Sigmoid colon (tissue), 7 donors: ENCODE measurements at regions of chr16 and their contacts with region 1.

Region 1: DNA sequence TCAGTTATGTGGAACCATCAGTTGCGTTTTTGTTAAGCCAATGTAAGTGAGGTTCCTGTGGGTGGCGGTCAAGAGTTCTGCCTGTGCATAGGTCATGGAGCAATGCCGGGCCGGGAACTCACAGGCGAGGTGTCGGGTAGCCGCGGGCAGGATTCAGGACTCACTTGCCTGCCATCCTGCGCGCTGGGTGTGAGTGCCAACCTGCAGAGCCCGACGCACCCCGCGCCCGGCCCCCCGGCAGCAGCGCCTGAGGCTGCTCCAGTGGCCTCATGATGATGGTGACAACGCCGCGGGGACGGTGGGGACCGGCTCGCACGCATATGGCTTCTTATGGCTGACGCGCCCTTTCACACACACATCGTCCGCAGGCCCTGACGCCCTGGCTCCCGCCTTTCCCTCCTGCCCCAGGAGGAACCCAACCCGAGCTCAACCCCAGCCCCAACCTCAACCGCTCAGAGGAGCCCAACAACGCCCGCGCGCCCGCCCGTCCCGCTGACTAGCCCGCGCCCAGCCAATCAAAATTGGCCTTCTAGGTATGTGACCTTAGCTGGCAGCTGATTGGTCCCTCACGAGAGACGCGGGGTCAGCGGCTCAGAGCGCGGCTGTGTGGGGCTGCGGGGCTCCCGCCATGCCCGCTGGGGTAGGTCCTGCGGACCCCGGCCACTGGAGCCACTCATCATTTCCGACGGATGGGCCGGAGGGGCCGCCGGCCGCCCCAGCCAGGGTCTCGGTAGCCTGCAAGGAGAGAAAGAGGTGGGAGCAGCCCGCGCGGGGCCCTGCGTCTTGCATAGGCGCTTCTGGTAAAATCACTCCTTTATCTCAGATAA is at the start of gene C16orf95:
- DNase-seq: peak; percentile 98
- H3K4me3 ChIP-seq: peak within 1 kb of the TSS; percentile 64 to 99 (median 90)
- H3K27ac ChIP-seq: peak within 1 kb of the TSS; percentile 92 to 98 (median 96)
- H3K4me1 ChIP-seq: peaks cover 0 to 12% (median 9%) of the 10 kb centered on the region in 4 donors
- H3K27me3 ChIP-seq: no peaks in the 10 kb centered on the region
- CTCF ChIP-seq: peak; percentile 56 to 70 (median 61)
- EP300 ChIP-seq: no peak
- POLR2A ChIP-seq: peak; percentile 96 to 97
- total RNA-seq, gene C16orf95: 0.36 to 1.9 (median 1.2) TPM in 3 of 4 donors, not detected in the other

Region 2: DNA sequence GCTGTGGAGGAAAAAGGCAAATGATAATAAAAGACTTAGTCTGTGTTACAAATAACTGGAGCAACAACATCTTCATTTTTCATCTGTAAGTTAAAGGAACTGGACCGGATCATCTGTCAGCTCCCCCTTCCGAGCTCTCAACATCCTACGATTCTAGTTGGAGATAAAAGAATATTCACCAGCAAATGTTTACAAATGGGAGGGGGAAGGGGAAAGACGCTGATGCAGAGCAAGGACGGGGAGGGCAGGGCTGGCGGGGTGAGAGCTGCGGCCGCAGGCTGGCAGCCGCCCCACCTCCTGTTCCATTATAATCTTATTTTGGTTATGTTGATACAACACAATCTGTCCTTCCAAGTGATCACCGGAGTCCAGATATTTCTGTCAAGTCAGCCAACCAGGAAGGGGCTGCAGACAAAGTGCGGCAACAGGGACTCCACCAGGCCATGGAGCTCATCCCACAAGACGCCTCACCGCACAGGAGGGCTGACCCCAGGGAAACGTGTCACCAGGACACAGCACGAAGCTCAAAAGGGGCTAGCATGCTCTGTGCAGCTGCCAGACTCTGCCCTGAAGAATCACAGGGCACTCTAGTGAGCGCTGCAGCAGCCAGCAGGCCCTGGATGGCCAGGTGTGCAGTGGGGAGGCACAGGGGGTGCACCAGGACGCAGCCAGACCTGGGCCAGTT is 46.8 kb after region 1 on chr16:
- intact Hi-C with region 1: loop called (anchors 5 kb)
- DNase-seq: peak; percentile 91
- H3K4me3 ChIP-seq: peak overlapping the region in 3 of 4 donors; percentile 11 to 26 (median 12)
- H3K27ac ChIP-seq: peak overlapping the region; percentile 76 to 89 (median 86)
- H3K4me1 ChIP-seq: peaks cover 0 to 48% (median 45%) of the 10 kb centered on the region in 4 donors
- H3K27me3 ChIP-seq: no peaks in the 10 kb centered on the region
- CTCF ChIP-seq: no peak
- EP300 ChIP-seq: peak in 3 of 4 donors; percentile 28 to 60 (median 54)
- POLR2A ChIP-seq: no peak

Region 3: DNA sequence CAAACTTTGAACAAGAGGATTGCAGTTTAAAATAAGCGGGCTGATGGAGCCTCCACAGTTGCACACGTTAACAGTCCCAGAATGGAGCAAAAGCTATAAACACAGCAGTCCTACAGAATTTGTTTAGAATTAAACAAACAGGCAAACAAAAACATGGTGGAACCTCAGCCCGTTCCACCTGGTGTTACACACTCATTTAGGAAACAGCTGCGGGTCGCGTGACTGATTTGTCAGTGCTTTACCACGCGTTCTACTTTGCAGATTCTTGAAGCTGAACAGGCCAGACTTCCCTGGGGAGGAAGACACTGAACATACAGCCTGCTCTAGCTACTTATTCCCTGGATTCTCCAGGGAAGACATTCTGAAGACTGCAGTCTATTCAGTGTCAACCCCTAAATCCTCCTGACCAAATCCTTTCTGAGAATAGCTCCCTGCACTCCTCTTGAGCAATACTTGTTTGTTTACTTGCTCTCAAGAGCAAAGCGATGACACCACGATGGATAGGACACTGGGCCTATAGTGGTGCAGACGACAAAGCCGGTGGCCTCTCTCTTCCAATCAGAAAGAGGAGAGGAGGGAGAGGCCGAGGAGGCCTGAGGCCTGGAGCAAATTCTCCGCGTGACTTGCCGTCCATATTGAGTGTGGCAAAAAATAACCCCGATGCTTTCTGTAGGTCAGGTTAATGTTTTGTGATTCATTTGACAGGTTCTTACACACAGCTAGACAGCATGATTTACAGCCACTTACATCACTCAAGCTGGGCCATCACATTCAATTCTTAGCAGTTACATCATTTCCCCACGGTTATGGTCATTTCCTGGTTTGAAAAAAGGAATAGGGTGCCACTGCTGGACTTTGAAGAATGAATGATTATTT is 71.0 kb after region 1 on chr16:
- intact Hi-C with region 1: loop called (anchors 2 kb)
- DNase-seq: peak; percentile 98
- H3K4me3 ChIP-seq: peak overlapping the region in 2 of 4 donors; percentile 13 to 18
- H3K27ac ChIP-seq: peak overlapping the region; percentile 88 to 100 (median 95)
- H3K4me1 ChIP-seq: peaks cover 0 to 44% (median 36%) of the 10 kb centered on the region in 4 donors
- H3K27me3 ChIP-seq: no peaks in the 10 kb centered on the region
- CTCF ChIP-seq: no peak
- EP300 ChIP-seq: peak in 3 of 4 donors; percentile 65 to 81 (median 69)
- POLR2A ChIP-seq: peak; percentile 9 to 44

Region 4: GRCh38 chr16:87550496-87550961 is 233.4 kb after region 1 on chr16:
- intact Hi-C with region 1: loop called (anchors 10 kb)
- DNase-seq: no peak
- H3K4me3 ChIP-seq: no peak overlapping the region
- H3K27ac ChIP-seq: no peak overlapping the region
- H3K4me1 ChIP-seq: peaks cover 0 to 4% (median 0%) of the 10 kb centered on the region in 4 donors
- H3K27me3 ChIP-seq: peaks cover 0 to 7% (median 0%) of the 10 kb centered on the region in 3 donors
- CTCF ChIP-seq: peak; percentile 51 to 93 (median 72)
- EP300 ChIP-seq: no peak
- POLR2A ChIP-seq: no peak

Region 5: GRCh38 chr16:88686439-88687253 is 1369.5 kb after region 1 on chr16 and contains the start of gene SNAI3:
- intact Hi-C with region 1: no loop called
- DNase-seq: no peak
- H3K4me3 ChIP-seq: peak within 1 kb of the TSS; percentile 3 to 51 (median 34)
- H3K27ac ChIP-seq: no peak within 1 kb of the TSS
- H3K4me1 ChIP-seq: peaks cover 0 to 21% (median 17%) of the 10 kb centered on the region in 4 donors
- H3K27me3 ChIP-seq: peaks cover 34 to 97% (median 85%) of the 10 kb centered on the region in 3 donors
- CTCF ChIP-seq: no peak
- EP300 ChIP-seq: no peak
- POLR2A ChIP-seq: no peak
- total RNA-seq, gene SNAI3: 0.71 to 0.82 TPM in 2 of 4 donors, not detected in the others